ENCODE measurements at regions of chr17 and their contacts with region 1.

Region 1: DNA sequence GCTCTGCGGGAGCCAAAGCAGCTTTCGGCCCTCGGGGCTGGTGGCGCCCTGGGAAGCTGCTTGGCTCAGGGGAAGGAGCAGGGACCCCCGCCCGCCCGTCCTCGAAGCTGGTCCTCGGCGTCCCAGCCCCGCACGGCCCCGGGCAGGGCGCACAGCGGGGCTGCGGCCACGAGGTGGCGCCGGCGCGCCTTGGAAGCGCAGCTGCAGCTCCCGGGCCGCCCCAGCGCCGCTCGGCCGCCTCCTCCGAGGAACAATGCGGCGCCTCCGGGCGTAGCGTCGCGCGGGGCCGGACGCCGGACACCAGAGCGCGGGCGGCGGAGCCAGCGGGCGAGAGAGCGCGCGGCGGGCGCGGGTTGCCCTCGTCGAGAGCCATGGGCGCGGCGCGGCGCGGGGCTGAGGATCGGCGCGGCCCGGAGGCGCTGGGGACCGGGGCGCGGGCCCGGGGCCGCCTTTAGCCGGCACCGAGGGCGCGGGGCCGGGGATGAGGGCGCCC is at the start of gene MGAT5B:
- DNase-seq: peak; percentile 87 to 96
- ATAC-seq: peak; percentile 69 to 84
- H3K4me3 ChIP-seq: peak within 1 kb of the TSS; percentile 70
- H3K27ac ChIP-seq: peak within 1 kb of the TSS; percentile 93 to 97
- H3K4me1 ChIP-seq: peaks cover 52% of the 10 kb centered on the region
- CTCF ChIP-seq: peak; percentile 99
- EP300 ChIP-seq: no peak
- POLR2A ChIP-seq: peak; percentile 38
- RAD21 ChIP-seq: peak; percentile 84 to 100
- polyA plus RNA-seq, gene MGAT5B: 7.6 and 10.3 TPM in 2 replicates

Region 2: DNA sequence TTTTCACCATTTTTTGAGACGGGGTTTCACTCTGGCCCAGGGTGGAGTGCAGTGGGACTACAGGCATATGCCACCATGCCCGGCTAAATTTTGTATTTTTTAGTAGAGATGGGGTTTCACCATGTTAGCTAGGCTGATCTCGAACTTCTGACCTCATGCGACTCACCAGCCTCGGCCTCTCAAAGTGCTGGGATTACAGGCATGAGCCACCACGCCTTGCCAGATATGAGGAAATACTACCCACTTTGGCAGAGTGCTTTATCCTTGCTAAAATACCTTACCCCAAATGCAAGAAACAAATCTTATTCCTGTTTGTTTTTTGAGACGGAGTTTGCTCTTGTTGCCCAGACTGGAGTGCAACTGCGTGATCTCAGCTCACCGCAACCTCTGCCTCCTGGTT is 62.9 kb before region 1 on chr17:
- CTCF ChIA-PET with region 1: interaction called, 15 read pairs
- POLR2A ChIA-PET with region 1: no interaction called
- DNase-seq: peak in 1 of 2 experiments; percentile 47
- ATAC-seq: peak in 1 of 2 experiments; percentile 42; a peak in 1 of 6 replicates
- H3K4me3 ChIP-seq: no peak overlapping the region
- H3K27ac ChIP-seq: peak overlapping the region in 1 of 2 experiments; percentile 33; a peak in 1 of 6 replicates
- H3K4me1 ChIP-seq: peaks cover 8% of the 10 kb centered on the region; the same call in 2 of the 3 replicates
- CTCF ChIP-seq: no peak
- EP300 ChIP-seq: no peak
- POLR2A ChIP-seq: no peak
- RAD21 ChIP-seq: no peak

Region 3: GRCh38 chr17:76843703-76844484 is 24.3 kb before region 1 on chr17:
- CTCF ChIA-PET with region 1: interaction called, 20 read pairs
- POLR2A ChIA-PET with region 1: no interaction called
- DNase-seq: peak in 1 of 2 experiments; percentile 33
- ATAC-seq: peak; percentile 14 to 23; a peak in 4 of 6 replicates
- H3K4me3 ChIP-seq: no peak overlapping the region
- H3K27ac ChIP-seq: no peak overlapping the region
- H3K4me1 ChIP-seq: peaks cover 33% of the 10 kb centered on the region
- CTCF ChIP-seq: no peak
- EP300 ChIP-seq: no peak
- POLR2A ChIP-seq: no peak
- RAD21 ChIP-seq: no peak

Region 4: DNA sequence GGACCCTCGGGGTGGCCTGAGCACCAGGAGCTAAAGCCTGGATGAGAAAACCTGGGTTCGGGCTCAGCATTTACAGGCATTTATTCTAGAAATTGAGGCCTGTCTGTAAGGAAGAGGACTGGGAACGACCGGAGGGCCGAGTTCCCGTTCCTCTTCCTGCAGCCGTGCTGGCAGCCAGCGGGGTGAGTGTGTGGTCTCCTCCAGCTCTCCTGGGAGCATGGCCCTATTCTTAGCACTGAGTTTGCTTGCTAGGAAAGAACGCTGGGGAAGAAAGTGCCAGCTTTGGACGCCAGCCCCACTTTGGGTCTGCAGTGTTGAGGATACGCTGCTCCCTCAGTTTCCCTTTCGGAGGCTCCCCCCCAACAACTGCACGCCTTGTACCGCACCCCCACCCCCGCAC is 49.6 kb after region 1 on chr17:
- CTCF ChIA-PET with region 1: interaction called, 15 read pairs
- POLR2A ChIA-PET with region 1: no interaction called
- DNase-seq: no peak
- ATAC-seq: no peak
- H3K4me3 ChIP-seq: no peak overlapping the region
- H3K27ac ChIP-seq: no peak overlapping the region
- H3K4me1 ChIP-seq: no peaks in the 10 kb centered on the region
- CTCF ChIP-seq: no peak
- EP300 ChIP-seq: no peak
- POLR2A ChIP-seq: no peak
- RAD21 ChIP-seq: no peak

Region 5: GRCh38 chr17:76997981-76998531 is 129.8 kb after region 1 on chr17:
- CTCF ChIA-PET with region 1: interaction called, 15 read pairs
- POLR2A ChIA-PET with region 1: interaction called, 12 read pairs
- DNase-seq: no peak
- ATAC-seq: no peak
- H3K4me3 ChIP-seq: no peak overlapping the region
- H3K27ac ChIP-seq: peak overlapping the region; percentile 55 to 93; a peak in 5 of 6 replicates
- H3K4me1 ChIP-seq: peaks cover 36% of the 10 kb centered on the region
- CTCF ChIP-seq: no peak
- EP300 ChIP-seq: no peak
- POLR2A ChIP-seq: no peak
- RAD21 ChIP-seq: no peak

Region 6: GRCh38 chr17:77076124-77076872 is 208.1 kb after region 1 on chr17:
- CTCF ChIA-PET with region 1: interaction called, 776 read pairs
- POLR2A ChIA-PET with region 1: no interaction called
- DNase-seq: no peak
- ATAC-seq: peak in 1 of 2 experiments; percentile 51; a peak in 2 of 6 replicates
- H3K4me3 ChIP-seq: no peak overlapping the region
- H3K27ac ChIP-seq: no peak overlapping the region
- H3K4me1 ChIP-seq: no peaks in the 10 kb centered on the region
- CTCF ChIP-seq: no peak
- EP300 ChIP-seq: no peak
- POLR2A ChIP-seq: no peak
- RAD21 ChIP-seq: no peak

Measured in A549 (cell line).